ENCODE measurements at regions of chr4 and their contacts with region 1.

Region 1: GRCh38 chr4:10123227-10124101 is 6.9 kb upstream of the WDR1 start:
- DNase-seq: peak; percentile 86
- ATAC-seq: peak; percentile 68
- H3K4me3 ChIP-seq: peak overlapping the region in 1 of 3 experiments; percentile 23; a peak in 2 of 6 replicates
- H3K27ac ChIP-seq: peak overlapping the region; percentile 98
- H3K4me1 ChIP-seq: peaks cover 62% of the 10 kb centered on the region
- H3K27me3 ChIP-seq: no peaks in the 10 kb centered on the region
- CTCF ChIP-seq: peak; percentile 47
- EP300 ChIP-seq: peak in 1 of 2 experiments; percentile 43; a peak in 2 of 4 replicates
- POLR2A ChIP-seq: peak in 1 of 2 experiments; percentile 27; a peak in 1 of 4 replicates
- RAD21 ChIP-seq: peak; percentile 27; the same call in 1 of the 2 replicates

Region 2: DNA sequence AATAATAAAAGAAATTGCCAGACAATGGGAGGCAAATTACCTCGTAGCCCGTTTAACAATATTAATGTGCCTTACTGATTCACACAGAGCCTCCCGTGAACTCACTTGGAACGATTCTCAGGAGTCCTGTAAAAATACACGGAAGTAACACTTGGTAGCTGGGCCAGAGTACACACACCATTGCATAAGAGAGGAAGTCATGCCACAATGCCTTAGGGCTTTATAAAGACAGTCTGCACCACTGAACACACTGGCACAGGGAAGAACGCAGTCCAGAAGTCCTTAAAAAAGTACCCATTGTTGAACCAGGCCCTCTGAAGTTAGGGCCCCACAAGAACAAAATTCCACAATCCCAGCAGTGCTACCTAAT is 117.2 kb before region 1 on chr4:
- CTCF ChIA-PET with region 1: no interaction called
- POLR2A ChIA-PET with region 1: interaction called, 3 read pairs
- in situ Hi-C with region 1: no loop called
- intact Hi-C with region 1: loop called (anchors 5 kb)
- DNase-seq: peak; percentile 86
- ATAC-seq: peak; percentile 88
- H3K4me3 ChIP-seq: peak overlapping the region in 2 of 3 experiments; percentile 45 to 52; a peak in 4 of 6 replicates
- H3K27ac ChIP-seq: peak overlapping the region; percentile 85
- H3K4me1 ChIP-seq: peaks cover 99% of the 10 kb centered on the region
- H3K27me3 ChIP-seq: no peaks in the 10 kb centered on the region
- CTCF ChIP-seq: no peak
- EP300 ChIP-seq: peak in 1 of 2 experiments; percentile 72; a peak in 2 of 4 replicates
- POLR2A ChIP-seq: no peak; a peak in 1 of 4 replicates
- RAD21 ChIP-seq: no peak

Region 3: GRCh38 chr4:10204401-10205058 is 81.1 kb after region 1 on chr4:
- CTCF ChIA-PET with region 1: no interaction called
- POLR2A ChIA-PET with region 1: no interaction called
- in situ Hi-C with region 1: no loop called
- intact Hi-C with region 1: no loop called
- DNase-seq: no peak
- ATAC-seq: no peak
- H3K4me3 ChIP-seq: no peak overlapping the region
- H3K27ac ChIP-seq: no peak overlapping the region
- H3K4me1 ChIP-seq: no peaks in the 10 kb centered on the region
- H3K27me3 ChIP-seq: no peaks in the 10 kb centered on the region
- CTCF ChIP-seq: no peak
- EP300 ChIP-seq: no peak
- POLR2A ChIP-seq: no peak
- RAD21 ChIP-seq: no peak

Region 4: DNA sequence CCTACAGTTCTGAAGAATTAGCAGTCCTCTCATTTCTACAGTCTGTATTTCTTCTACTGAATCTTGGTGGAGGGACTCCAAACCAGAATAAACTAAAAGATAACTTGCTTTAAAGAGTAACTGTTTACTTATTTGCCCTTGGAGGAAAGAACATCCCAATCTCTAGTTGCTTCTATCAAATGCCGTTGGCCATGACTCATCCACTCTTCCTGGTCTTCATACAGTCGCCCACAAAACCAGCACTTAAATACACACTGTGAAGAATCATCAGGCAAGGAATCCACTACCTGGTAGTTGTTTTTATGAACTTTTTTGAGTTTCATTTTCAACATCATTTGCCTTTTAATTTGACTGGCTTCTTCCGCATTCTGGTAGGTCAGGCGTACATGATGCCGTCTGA is 319.5 kb after region 1 on chr4:
- CTCF ChIA-PET with region 1: no interaction called
- POLR2A ChIA-PET with region 1: no interaction called
- in situ Hi-C with region 1: no loop called
- intact Hi-C with region 1: no loop called
- DNase-seq: no peak
- ATAC-seq: no peak
- H3K4me3 ChIP-seq: no peak overlapping the region
- H3K27ac ChIP-seq: no peak overlapping the region
- H3K4me1 ChIP-seq: no peaks in the 10 kb centered on the region
- H3K27me3 ChIP-seq: peaks cover 0 to 10% of the 10 kb centered on the region in 2 experiments; a peak in 1 of 5 replicates
- CTCF ChIP-seq: no peak
- EP300 ChIP-seq: no peak
- POLR2A ChIP-seq: no peak
- RAD21 ChIP-seq: no peak

Region 5: GRCh38 chr4:10478621-10479020 is 355.2 kb after region 1 on chr4:
- CTCF ChIA-PET with region 1: no interaction called
- POLR2A ChIA-PET with region 1: no interaction called
- in situ Hi-C with region 1: no loop called
- intact Hi-C with region 1: no loop called
- DNase-seq: no peak
- ATAC-seq: no peak
- H3K4me3 ChIP-seq: no peak overlapping the region
- H3K27ac ChIP-seq: no peak overlapping the region
- H3K4me1 ChIP-seq: no peaks in the 10 kb centered on the region
- H3K27me3 ChIP-seq: no peaks in the 10 kb centered on the region
- CTCF ChIP-seq: no peak
- EP300 ChIP-seq: no peak
- POLR2A ChIP-seq: no peak
- RAD21 ChIP-seq: no peak